Prostate gland (tissue), 2 donors: ENCODE measurements at regions of chr1 and their contacts with region 1.

Region 1: GRCh38 chr1:20166051-20166450 is 19.8 kb upstream of the UBXN10 start:
- DNase-seq: peak; percentile 39
- H3K4me3 ChIP-seq: no peak overlapping the region
- H3K27ac ChIP-seq: no peak overlapping the region
- H3K4me1 ChIP-seq: peaks cover 3% of the 10 kb centered on the region
- H3K27me3 ChIP-seq: no peaks in the 10 kb centered on the region
- CTCF ChIP-seq: no peak
- POLR2A ChIP-seq: no peak

Region 2: GRCh38 chr1:20008391-20008841 is 157.6 kb before region 1 on chr1:
- intact Hi-C with region 1: no loop called
- DNase-seq: no peak
- H3K4me3 ChIP-seq: no peak overlapping the region
- H3K27ac ChIP-seq: peak overlapping the region in 1 of 2 donors; percentile 22
- H3K4me1 ChIP-seq: no peaks in the 10 kb centered on the region
- H3K27me3 ChIP-seq: no peaks in the 10 kb centered on the region
- CTCF ChIP-seq: no peak
- POLR2A ChIP-seq: no peak

Region 3: GRCh38 chr1:20194757-20195461 is 28.9 kb after region 1 on chr1:
- intact Hi-C with region 1: loop called (anchors 1 kb)
- DNase-seq: peak; percentile 58
- H3K4me3 ChIP-seq: no peak overlapping the region
- H3K27ac ChIP-seq: peak overlapping the region in 1 of 2 donors; percentile 2
- H3K4me1 ChIP-seq: no peaks in the 10 kb centered on the region
- H3K27me3 ChIP-seq: no peaks in the 10 kb centered on the region
- CTCF ChIP-seq: peak; percentile 34 to 80 (median 79)
- POLR2A ChIP-seq: no peak

Region 4: GRCh38 chr1:20242810-20243479 is 76.9 kb after region 1 on chr1:
- intact Hi-C with region 1: no loop called
- DNase-seq: no peak
- H3K4me3 ChIP-seq: no peak overlapping the region
- H3K27ac ChIP-seq: no peak overlapping the region
- H3K4me1 ChIP-seq: no peaks in the 10 kb centered on the region
- H3K27me3 ChIP-seq: no peaks in the 10 kb centered on the region
- CTCF ChIP-seq: no peak
- POLR2A ChIP-seq: no peak